Activated CD4-positive, alpha-beta memory T cell treated with anti-CD3 and anti-CD28 coated beads, Interleukin-2, amount 10 ng/mL, durations not matched to agents 7 days and 5 days (primary cell): ENCODE measurements at regions of chr1 and their contacts with region 1.

Region 1: GRCh38 chr1:168342572-168343280 is 62.0 kb downstream of the TBX19 start:
- DNase-seq: peak; percentile 92
- H3K4me3 Mint-ChIP-seq: no peak overlapping the region
- H3K27ac Mint-ChIP-seq: peak overlapping the region; percentile 75
- H3K4me1 Mint-ChIP-seq: peaks cover 82% of the 10 kb centered on the region
- H3K27me3 Mint-ChIP-seq: peaks cover 3% of the 10 kb centered on the region

Region 2: GRCh38 chr1:168129933-168130332 is 212.8 kb before region 1 on chr1:
- CTCF ChIA-PET with region 1: no interaction called
- POLR2A ChIA-PET with region 1: no interaction called
- DNase-seq: no peak
- H3K4me3 Mint-ChIP-seq: no peak overlapping the region
- H3K27ac Mint-ChIP-seq: no peak overlapping the region
- H3K4me1 Mint-ChIP-seq: no peaks in the 10 kb centered on the region
- H3K27me3 Mint-ChIP-seq: peaks cover 27% of the 10 kb centered on the region

Region 3: GRCh38 chr1:168330285-168330684 is 12.4 kb before region 1 on chr1:
- CTCF ChIA-PET with region 1: interaction called, 13 read pairs
- POLR2A ChIA-PET with region 1: interaction called, 5 read pairs
- DNase-seq: no peak
- H3K4me3 Mint-ChIP-seq: no peak overlapping the region
- H3K27ac Mint-ChIP-seq: no peak overlapping the region
- H3K4me1 Mint-ChIP-seq: no peaks in the 10 kb centered on the region
- H3K27me3 Mint-ChIP-seq: no peaks in the 10 kb centered on the region

Region 4: DNA sequence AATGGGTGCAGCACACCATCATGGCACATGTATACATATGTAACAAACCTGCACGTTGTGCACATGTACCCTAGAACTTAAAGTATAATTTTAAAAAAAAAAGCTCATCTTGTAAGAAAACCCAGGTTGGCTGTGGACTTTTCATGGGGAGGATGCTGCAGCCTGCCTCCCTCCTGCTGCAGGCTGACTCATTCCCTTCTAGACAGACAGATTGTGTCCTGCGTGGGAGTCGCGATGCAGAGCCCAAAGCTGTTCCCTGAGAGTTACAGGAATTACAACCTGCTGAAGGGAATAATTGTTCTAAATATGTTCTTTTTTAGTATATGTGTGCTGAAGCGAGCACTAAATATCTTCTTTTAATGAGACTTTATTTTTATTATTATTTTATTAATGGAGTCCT is 31.1 kb after region 1 on chr1:
- CTCF ChIA-PET with region 1: interaction called, 20 read pairs
- POLR2A ChIA-PET with region 1: no interaction called
- DNase-seq: no peak
- H3K4me3 Mint-ChIP-seq: no peak overlapping the region
- H3K27ac Mint-ChIP-seq: no peak overlapping the region
- H3K4me1 Mint-ChIP-seq: no peaks in the 10 kb centered on the region
- H3K27me3 Mint-ChIP-seq: peaks cover 3% of the 10 kb centered on the region

Region 5: GRCh38 chr1:168421399-168422004 is 78.8 kb after region 1 on chr1:
- CTCF ChIA-PET with region 1: interaction called, 74 read pairs
- POLR2A ChIA-PET with region 1: interaction called, 14 read pairs
- DNase-seq: peak; percentile 41
- H3K4me3 Mint-ChIP-seq: peak overlapping the region; percentile 45
- H3K27ac Mint-ChIP-seq: peak overlapping the region; percentile 86
- H3K4me1 Mint-ChIP-seq: peaks cover 42% of the 10 kb centered on the region
- H3K27me3 Mint-ChIP-seq: peaks cover 2% of the 10 kb centered on the region

Region 6: DNA sequence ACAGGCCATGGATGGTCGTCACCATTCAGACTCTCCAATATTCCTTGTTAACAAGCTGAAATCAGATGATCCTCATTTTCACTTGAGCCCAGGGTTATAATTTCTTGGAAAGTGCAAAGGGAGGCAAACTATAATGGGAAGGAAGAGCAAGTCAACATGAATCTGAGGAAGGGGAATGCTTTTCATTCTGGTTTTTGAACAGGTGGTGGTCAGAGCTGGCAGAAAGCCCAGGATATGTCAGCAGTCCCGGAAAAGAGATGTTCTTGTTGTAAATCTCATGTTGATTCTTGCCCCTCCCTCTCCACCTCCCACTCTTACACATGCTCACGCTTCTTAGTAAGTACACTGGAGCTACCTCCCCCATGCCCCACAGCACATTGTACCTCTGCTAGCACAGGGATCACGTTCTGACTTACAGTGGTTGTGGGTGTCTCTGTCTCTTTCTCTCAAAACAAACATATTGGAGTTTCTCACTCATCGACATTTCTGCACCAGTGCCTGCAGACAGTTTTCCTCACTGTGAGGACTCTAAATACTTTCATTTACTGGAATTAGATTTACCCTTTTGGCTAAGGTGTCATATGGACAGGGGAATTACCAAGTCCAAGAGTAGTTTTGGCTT is 123.5 kb after region 1 on chr1:
- CTCF ChIA-PET with region 1: interaction called, 36 read pairs
- POLR2A ChIA-PET with region 1: interaction called, 5 read pairs
- DNase-seq: peak; percentile 44
- H3K4me3 Mint-ChIP-seq: no peak overlapping the region
- H3K27ac Mint-ChIP-seq: peak overlapping the region; percentile 82
- H3K4me1 Mint-ChIP-seq: peaks cover 62% of the 10 kb centered on the region
- H3K27me3 Mint-ChIP-seq: peaks cover 6% of the 10 kb centered on the region

Region 7: DNA sequence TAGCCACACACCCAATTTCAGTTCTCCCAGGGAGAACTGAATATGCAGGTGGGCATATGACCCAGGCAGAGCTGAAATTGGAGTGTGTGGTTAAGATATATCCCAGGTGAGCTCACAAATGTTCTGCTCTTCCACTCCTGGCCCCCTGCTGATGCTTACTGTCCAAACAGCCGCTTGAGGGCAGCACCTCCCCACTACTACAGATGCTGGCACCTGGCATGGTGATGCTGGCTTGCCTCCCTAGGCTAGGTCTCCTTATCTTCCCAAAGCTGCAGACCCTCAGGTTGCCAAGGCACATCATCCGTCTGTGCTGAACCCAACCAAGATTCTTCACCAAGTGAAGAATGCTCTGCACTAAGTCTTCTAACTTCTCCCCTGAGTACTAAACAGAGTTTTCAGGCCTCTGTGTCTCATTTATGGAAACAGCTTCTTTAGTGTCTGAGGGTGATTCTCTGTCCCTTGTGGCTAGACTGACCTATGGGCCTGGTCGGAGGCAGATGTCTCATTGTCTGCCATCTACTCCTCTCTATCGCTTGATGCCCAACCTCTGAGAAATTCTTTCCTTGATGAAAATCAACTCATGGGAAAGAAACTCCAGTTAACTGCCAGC is 260.9 kb after region 1 on chr1:
- CTCF ChIA-PET with region 1: interaction called, 26 read pairs
- POLR2A ChIA-PET with region 1: interaction called, 6 read pairs
- DNase-seq: peak; percentile 76
- H3K4me3 Mint-ChIP-seq: no peak overlapping the region
- H3K27ac Mint-ChIP-seq: no peak overlapping the region
- H3K4me1 Mint-ChIP-seq: no peaks in the 10 kb centered on the region
- H3K27me3 Mint-ChIP-seq: peaks cover 6% of the 10 kb centered on the region